Right cardiac atrium (tissue), 5 donors: ENCODE measurements at regions of chr20 and their contacts with region 1.

Region 1: GRCh38 chr20:49821870-49822331 is 9.3 kb downstream of the SLC9A8 start:
- DNase-seq: no peak
- ATAC-seq: peak; percentile 61 to 79
- H3K4me3 ChIP-seq: no peak overlapping the region
- H3K27ac ChIP-seq: no peak overlapping the region
- H3K4me1 ChIP-seq: no peaks in the 10 kb centered on the region
- H3K27me3 ChIP-seq: no peaks in the 10 kb centered on the region

Region 2: DNA sequence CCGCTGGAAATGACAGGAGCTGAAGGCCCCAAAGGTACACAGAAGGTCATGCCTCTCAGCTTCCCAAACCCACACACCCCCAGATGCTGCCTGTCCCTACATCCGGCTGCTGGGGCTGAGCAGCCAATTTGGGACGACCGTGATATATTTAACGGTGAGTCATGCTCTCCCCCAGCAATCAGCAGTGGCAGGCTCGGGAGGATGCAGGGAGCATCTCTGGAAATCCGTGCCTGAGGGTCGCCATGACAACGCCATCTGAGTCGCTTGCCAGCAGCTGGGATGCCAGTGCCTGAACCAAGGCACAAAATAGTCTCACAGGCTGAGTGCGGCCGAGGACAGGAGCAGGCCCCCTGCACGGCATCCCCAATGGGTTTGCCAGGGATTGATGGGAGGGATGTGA is 397.4 kb before region 1 on chr20:
- intact Hi-C with region 1: no loop called
- DNase-seq: no peak
- ATAC-seq: no peak
- H3K4me3 ChIP-seq: no peak overlapping the region
- H3K27ac ChIP-seq: no peak overlapping the region
- H3K4me1 ChIP-seq: peaks cover 6% of the 10 kb centered on the region
- H3K27me3 ChIP-seq: no peaks in the 10 kb centered on the region

Region 3: GRCh38 chr20:49631061-49631788 is 190.7 kb before region 1 on chr20:
- intact Hi-C with region 1: loop called in 1 of 4 experiments (anchors 10 kb)
- DNase-seq: peak in 1 of 3 donors; percentile 56
- ATAC-seq: peak; percentile 35 to 45
- H3K4me3 ChIP-seq: no peak overlapping the region
- H3K27ac ChIP-seq: no peak overlapping the region
- H3K4me1 ChIP-seq: peaks cover 2% of the 10 kb centered on the region
- H3K27me3 ChIP-seq: no peaks in the 10 kb centered on the region

Region 4: DNA sequence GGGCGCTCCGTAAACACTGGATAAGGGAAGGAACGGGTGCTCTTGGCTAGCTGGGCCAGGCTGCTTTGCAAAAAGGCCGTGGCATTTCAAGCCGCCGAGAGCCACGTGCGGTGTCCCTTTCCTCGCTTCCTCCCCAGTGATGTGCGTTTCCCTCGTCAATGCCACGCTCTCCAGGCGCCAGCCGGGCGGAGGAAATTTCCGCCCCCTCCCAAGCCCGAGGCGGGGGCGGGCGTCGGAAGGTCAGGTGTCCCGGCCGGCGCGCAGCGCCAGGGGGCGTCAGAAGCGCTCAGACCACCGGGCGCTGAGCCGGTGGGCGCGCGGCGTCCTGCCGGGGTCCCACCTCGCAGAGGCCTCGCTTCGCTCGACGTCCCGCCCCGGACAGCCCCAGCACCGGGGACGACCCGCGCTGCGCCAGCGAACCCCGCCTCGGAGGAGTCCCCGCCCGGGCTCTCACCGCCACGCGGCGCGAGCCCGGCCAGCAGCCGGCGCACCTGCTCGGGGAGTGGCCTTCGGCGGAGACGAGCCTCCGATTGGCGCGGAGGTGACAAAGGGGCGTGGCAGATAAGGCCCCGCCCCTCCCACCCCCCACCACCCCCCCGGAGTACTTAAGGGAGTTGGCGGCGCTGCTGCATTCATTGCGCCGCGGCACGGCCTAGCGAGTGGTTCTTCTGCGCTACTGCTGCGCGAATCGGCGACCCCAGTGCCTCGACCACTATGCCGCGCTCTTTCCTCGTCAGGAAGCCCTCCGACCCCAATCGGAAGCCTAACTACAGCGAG is 160.6 kb after region 1 on chr20 and contains the start of gene SNAI1:
- intact Hi-C with region 1: no loop called
- DNase-seq: peak; percentile 85 to 93 (median 92)
- ATAC-seq: peak; percentile 80 to 85
- H3K4me3 ChIP-seq: peak within 1 kb of the TSS; percentile 69
- H3K27ac ChIP-seq: peak within 1 kb of the TSS; percentile 31
- H3K4me1 ChIP-seq: peaks cover 1% of the 10 kb centered on the region
- H3K27me3 ChIP-seq: no peaks in the 10 kb centered on the region
- total RNA-seq, gene SNAI1: 2.9 to 6.0 (median 3.4) TPM